Psoas muscle (tissue), 8 donors: ENCODE measurements at regions of chr14 and their contacts with region 1.

Region 1: DNA sequence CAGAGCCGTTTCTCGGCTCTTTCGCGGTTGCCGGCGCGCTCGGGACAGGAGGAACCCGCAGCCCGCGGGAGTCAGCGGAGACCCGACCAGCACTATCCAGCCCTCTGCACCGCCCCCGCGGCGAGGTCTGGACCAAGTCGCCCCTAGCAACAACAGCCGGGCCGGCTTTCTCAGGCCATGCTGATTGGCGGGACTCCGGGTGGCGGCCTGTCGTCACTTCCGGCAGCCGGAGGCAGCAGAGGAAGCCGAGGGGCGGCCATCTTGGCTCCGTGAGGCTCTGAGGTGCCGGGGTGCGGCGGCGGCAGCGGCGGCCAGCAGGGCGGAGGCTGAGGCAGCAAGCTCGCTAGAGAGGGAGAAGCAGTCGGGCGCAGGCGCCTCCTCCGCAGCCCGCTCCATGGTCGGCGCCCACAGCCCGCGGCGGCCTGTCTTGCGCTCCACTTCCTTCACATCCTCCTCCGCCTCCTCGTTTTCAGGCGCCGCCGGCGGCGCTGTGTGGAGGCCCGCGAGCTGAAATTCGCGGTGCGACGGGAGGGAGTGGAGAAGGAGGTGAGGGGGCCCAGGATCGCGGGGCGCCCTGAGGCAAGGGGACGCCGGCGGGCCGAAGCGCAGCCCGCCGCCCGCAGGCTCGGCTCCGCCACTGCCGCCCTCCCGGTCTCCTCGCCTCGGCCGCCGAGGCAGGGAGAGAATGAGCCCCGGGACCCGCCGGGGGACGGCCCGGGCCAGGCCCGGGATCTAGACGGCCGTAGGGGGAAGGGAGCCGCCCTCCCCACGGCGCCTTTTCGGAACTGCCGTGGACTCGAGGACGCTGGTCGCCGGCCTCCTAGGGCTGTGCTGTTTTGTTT is at the start of gene MARK3:
- DNase-seq: peak; percentile 99
- ATAC-seq: peak; percentile 94 to 98 (median 96)
- H3K4me3 ChIP-seq: peak within 1 kb of the TSS; percentile 98
- H3K27ac ChIP-seq: peak within 1 kb of the TSS; percentile 99
- H3K4me1 ChIP-seq: peaks cover 20% of the 10 kb centered on the region
- H3K27me3 ChIP-seq: no peaks in the 10 kb centered on the region
- CTCF ChIP-seq: peak; percentile 30
- total RNA-seq, gene MARK3: 56.0 to 75.9 (median 66.7) TPM

Region 2: GRCh38 chr14:103333754-103334643 is 51.4 kb before region 1 on chr14 and contains the start of gene EIF5:
- intact Hi-C with region 1: loop called (anchors 2 to 5 kb)
- DNase-seq: peak; percentile 99 to 100
- ATAC-seq: peak; percentile 91 to 93 (median 92)
- H3K4me3 ChIP-seq: peak within 1 kb of the TSS; percentile 96
- H3K27ac ChIP-seq: peak within 1 kb of the TSS; percentile 100
- H3K4me1 ChIP-seq: peaks cover 25% of the 10 kb centered on the region
- H3K27me3 ChIP-seq: no peaks in the 10 kb centered on the region
- CTCF ChIP-seq: peak; percentile 24
- total RNA-seq, gene EIF5: 222 to 535 (median 414) TPM